ENCODE measurements at regions of chr5 and their contacts with region 1.

Region 1: DNA sequence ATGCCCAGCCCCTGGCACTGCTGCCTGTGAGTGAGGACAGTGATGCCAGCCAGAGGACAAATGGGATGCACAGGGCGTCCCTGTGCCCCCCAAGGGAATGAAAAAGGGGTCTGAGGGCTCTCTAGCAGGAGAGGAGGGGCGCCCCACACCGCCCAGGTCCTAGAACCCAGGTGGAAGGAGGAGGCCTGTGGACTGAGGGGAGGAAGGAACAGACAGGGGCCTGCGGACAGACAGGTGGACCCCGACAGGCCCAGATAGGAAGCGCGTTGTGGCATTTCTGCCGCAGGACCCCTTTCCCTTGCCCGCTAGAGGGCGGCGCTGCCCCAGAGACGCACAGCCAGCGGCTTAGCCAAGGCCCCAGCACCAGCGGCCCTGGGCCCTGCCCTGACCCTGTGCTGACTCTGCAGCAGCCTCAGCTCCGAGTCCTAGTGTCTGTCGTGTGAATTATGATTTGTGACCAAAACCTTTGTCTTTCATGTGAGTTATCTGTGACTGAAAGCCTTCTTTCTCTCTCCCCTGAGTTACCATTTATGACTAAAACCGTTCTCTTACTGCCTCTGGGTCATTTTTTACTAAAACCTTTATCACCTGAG is 30.7 kb downstream of the TRIP13 start:
- DNase-seq: peak; percentile 65 to 86 (median 73)
- H3K4me3 ChIP-seq: no peak overlapping the region
- H3K27ac ChIP-seq: no peak overlapping the region
- H3K4me1 ChIP-seq: no peaks in the 10 kb centered on the region
- H3K27me3 ChIP-seq: no peaks in the 10 kb centered on the region
- CTCF ChIP-seq: peak; percentile 45 to 64 (median 62)
- EP300 ChIP-seq: no peak
- POLR2A ChIP-seq: no peak

Region 2: GRCh38 chr5:746258-746761 is 177.1 kb before region 1 on chr5:
- intact Hi-C with region 1: no loop called
- DNase-seq: peak in 1 of 5 donors; percentile 2
- H3K4me3 ChIP-seq: no peak overlapping the region
- H3K27ac ChIP-seq: no peak overlapping the region
- H3K4me1 ChIP-seq: no peaks in the 10 kb centered on the region
- H3K27me3 ChIP-seq: no peaks in the 10 kb centered on the region
- CTCF ChIP-seq: no peak
- EP300 ChIP-seq: no peak
- POLR2A ChIP-seq: no peak

Region 3: DNA sequence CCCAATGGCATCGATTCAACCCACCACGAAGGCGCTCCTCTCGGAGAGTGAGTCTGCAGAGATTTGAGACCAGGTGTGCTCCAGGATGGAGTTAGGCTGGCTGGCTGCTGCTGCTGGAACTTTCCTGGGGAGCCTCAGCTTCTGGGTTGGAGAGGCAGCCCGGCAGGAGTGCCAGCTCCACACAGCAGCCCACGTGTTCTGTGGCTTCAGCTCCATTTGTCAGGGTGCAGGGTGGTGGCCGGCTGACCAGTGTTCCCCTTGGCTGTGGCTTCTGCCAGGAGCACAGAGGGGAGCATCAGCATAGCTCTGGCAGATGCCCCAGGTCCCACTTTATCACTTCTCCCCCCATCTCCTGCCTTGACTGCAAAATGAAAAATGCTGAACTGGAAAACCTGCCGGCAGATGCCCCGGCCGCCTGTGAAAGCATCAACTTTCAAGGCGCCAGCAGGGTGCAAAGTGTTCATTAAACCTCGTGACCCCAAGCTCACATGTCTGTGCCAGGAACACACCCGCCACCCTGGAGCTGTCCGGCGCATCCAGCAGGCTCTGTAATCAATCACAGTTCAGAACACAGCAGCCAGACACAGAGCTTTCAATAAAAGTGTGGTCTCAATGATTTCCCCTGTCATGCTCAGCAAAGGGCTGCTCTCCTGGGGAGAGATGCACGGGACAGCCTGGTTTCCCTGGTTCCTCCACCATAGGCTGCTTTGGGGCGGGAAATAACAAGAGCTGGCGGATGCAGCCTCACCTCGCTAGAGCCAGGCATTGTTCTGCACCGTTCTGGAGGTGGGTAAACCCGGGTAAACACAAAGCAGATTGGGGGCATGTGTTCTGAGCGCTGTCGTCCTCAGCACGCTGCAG is 22.5 kb after region 1 on chr5:
- intact Hi-C with region 1: no loop called
- DNase-seq: no peak
- H3K4me3 ChIP-seq: no peak overlapping the region
- H3K27ac ChIP-seq: no peak overlapping the region
- H3K4me1 ChIP-seq: peaks cover 2% of the 10 kb centered on the region
- H3K27me3 ChIP-seq: no peaks in the 10 kb centered on the region
- CTCF ChIP-seq: no peak
- EP300 ChIP-seq: no peak
- POLR2A ChIP-seq: no peak

Region 4: DNA sequence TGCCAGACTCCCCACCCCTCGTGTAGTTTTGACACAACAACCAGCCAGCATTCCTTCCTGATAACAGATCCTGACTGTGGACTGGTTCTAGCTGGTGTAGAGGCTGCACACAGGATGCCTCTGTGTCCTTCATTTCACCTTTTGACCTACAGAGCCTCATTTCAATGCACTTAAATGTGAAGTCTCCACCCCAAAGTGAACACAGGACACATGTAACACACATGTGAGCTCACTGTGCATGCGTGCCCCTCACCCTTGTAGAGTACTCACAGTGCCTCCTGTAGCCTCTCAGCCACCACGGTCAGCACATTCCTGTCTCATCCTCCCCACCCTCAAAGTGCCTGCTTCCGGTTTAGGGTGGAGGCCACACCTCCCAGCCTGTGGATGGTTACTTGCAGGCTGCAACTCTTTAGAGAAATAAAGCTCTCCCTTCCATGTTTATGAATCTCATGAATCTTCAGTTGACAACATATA is 73.7 kb after region 1 on chr5:
- intact Hi-C with region 1: no loop called
- DNase-seq: peak in 3 of 5 donors; percentile 14 to 35 (median 24)
- H3K4me3 ChIP-seq: no peak overlapping the region
- H3K27ac ChIP-seq: no peak overlapping the region
- H3K4me1 ChIP-seq: peaks cover 15% of the 10 kb centered on the region
- H3K27me3 ChIP-seq: no peaks in the 10 kb centered on the region
- CTCF ChIP-seq: no peak
- EP300 ChIP-seq: no peak
- POLR2A ChIP-seq: no peak

Region 5: DNA sequence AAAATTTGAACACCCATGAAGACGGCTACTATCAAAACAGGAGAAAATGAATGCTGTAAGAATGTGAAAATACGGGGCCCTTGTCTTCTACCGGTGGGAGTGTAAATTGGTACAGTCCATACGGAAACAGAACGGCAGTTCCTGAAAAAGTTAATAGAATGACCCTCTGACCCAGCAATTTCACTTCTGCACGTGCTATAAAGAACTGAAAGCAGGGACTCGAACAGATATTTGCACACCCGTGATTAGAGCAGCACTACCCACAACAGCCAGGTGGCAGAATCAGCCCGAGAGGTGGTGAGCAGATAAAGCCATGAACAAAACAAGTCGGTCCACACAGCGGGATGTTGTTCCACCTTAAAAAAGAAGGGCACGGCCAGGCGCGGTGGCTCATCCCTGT is 211.1 kb after region 1 on chr5:
- intact Hi-C with region 1: loop called in 1 of 4 experiments (anchors 10 kb)
- DNase-seq: no peak
- H3K4me3 ChIP-seq: no peak overlapping the region
- H3K27ac ChIP-seq: no peak overlapping the region
- H3K4me1 ChIP-seq: no peaks in the 10 kb centered on the region
- H3K27me3 ChIP-seq: no peaks in the 10 kb centered on the region
- CTCF ChIP-seq: no peak
- EP300 ChIP-seq: no peak
- POLR2A ChIP-seq: no peak

Region 6: GRCh38 chr5:1167728-1168709 is 244.6 kb after region 1 on chr5:
- intact Hi-C with region 1: loop called in 1 of 4 experiments (anchors 10 kb)
- DNase-seq: peak; percentile 62 to 72 (median 70)
- H3K4me3 ChIP-seq: no peak overlapping the region
- H3K27ac ChIP-seq: no peak overlapping the region
- H3K4me1 ChIP-seq: peaks cover 3% of the 10 kb centered on the region
- H3K27me3 ChIP-seq: no peaks in the 10 kb centered on the region
- CTCF ChIP-seq: peak; percentile 14 to 46 (median 46)
- EP300 ChIP-seq: no peak
- POLR2A ChIP-seq: no peak